Activated B cell treated with CpG ODN at 0.5 μM for 24 hours (primary cell): ENCODE measurements at regions of chr12 and their contacts with region 1.

Region 1: GRCh38 chr12:106288494-106289195 is 13.9 kb upstream of the TCP11L2 start:
- DNase-seq: no peak
- ATAC-seq: peak; percentile 66
- H3K4me3 Mint-ChIP-seq: no peak overlapping the region
- H3K27ac Mint-ChIP-seq: peak overlapping the region; percentile 56
- H3K4me1 Mint-ChIP-seq: peaks cover 42% of the 10 kb centered on the region
- H3K27me3 Mint-ChIP-seq: no peaks in the 10 kb centered on the region
- CTCF ChIP-seq: no peak

Region 2: GRCh38 chr12:106276032-106276740 is 12.5 kb before region 1 on chr12:
- CTCF ChIA-PET with region 1: no interaction called
- POLR2A ChIA-PET with region 1: no interaction called
- intact Hi-C with region 1: loop called (anchors 1 kb)
- DNase-seq: peak; percentile 29
- ATAC-seq: peak; percentile 92
- H3K4me3 Mint-ChIP-seq: peak overlapping the region; percentile 73
- H3K27ac Mint-ChIP-seq: peak overlapping the region; percentile 89
- H3K4me1 Mint-ChIP-seq: peaks cover 41% of the 10 kb centered on the region
- H3K27me3 Mint-ChIP-seq: peaks cover 3% of the 10 kb centered on the region
- CTCF ChIP-seq: no peak